Posterior cingulate gyrus (tissue), 11 donors: ENCODE measurements at regions of chr2 and their contacts with region 1.

Region 1: DNA sequence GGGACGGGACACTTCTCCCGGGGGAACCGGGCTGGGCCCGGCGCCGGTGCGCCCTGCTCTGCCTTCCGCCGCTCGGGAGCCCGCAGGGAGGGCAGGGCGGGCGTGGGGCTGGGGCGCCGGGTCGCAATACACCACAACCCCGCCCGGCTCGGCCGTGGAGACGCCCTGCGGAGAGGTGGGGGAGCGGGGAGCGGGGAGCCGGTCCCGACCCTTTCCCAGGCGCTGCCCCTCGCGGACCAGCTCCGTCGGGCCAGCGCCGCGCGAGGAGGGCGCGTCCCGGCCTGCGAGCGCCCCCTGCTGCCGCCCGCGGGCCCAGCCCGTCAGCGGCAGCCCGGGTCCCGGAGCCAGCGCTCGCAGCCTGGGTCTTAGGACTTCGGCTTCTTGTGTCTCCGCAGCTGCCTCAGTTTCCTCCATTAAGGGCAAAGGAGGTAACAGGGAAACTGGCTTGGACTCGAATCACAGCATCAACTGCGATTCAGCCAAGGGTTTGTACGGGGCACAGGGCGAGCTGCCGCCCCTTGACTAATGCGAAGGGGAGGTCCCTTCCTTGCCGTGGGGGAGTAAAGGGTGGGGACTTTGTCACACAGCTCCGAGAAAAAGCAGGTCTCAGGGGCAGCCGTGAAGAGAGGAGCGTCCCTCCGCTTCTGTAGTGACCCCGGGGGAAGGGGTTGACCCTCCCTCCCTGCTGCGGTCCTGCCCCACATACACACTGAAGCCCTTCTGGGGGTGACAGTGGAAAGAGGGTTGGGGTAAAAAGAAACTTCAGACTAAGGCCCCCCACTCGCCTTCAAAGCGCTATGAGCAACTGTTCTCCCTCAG is 717 bp upstream of the ADRA2B start:
- DNase-seq: peak in 7 of 10 donors; percentile 27 to 92 (median 67)

Region 2: DNA sequence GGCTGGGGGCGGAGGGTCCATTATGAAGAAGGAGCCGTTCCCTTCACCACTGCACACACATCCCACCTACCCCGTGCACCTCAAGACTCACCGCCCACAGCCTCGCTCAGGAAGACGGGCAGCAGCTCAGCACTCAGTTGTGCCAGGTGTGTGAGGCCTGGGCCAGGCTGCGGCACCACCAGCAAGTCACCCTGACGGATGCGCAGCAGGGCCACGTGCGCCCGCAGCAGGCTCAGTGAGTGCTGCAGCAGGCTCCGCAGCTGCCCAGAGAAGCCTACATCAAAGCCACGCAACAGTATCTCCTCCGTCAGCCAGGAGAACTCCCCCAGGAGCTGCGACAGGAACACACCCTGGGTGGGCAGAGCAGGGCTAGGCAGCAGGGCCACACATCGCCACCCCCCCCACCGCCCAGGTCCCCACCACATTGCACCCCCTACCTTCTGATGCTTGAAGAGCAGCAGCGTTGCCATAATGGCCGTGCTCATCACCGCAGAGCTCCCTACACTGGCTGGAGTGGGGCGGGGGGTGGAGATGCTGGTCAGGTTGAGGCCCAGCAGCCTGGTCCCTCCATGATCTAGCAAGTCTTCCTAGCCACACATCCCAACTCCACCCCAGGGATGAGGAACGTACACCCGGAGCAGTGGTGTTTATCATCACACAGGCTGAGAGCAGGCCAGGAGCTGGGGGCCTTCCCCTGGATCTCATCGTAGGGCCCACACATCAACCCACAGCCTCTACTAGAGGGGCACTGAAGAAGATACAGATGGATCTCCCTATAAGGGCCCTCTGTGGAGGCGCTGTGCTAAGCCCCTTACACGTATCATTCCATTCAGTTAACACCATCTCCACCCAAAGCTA is 92.5 kb before region 1 on chr2:
- intact Hi-C with region 1: loop called (anchors 10 kb)
- DNase-seq: peak in 5 of 10 donors; percentile 55 to 92 (median 84)

Region 3: GRCh38 chr2:96072746-96073145 is 44.3 kb before region 1 on chr2:
- intact Hi-C with region 1: loop called (anchors 5 kb)
- DNase-seq: peak in 3 of 10 donors; percentile 39 to 82 (median 70)